CD4-positive, alpha-beta T cell (primary cell): ENCODE measurements at regions of chr4 and their contacts with region 1.

Region 1: GRCh38 chr4:70901984-70902576 is at the start of gene MOB1B:
- DNase-seq: peak; percentile 69 to 92 (median 82)
- ATAC-seq: peak; percentile 97
- H3K4me3 ChIP-seq: peak within 1 kb of the TSS; percentile 74
- H3K4me3 Mint-ChIP-seq: peak within 1 kb of the TSS; percentile 100
- H3K27ac ChIP-seq: peak within 1 kb of the TSS in 1 of 2 donors; percentile 16
- H3K27ac Mint-ChIP-seq: peak within 1 kb of the TSS; percentile 85
- H3K4me1 ChIP-seq: peaks cover 16% of the 10 kb centered on the region
- H3K4me1 Mint-ChIP-seq: peaks cover 48% of the 10 kb centered on the region
- H3K27me3 ChIP-seq: no peaks in the 10 kb centered on the region
- H3K27me3 Mint-ChIP-seq: no peaks in the 10 kb centered on the region
- CTCF ChIP-seq: peak; percentile 27
- total RNA-seq, gene MOB1B: 13.1 to 13.4 TPM

Region 2: DNA sequence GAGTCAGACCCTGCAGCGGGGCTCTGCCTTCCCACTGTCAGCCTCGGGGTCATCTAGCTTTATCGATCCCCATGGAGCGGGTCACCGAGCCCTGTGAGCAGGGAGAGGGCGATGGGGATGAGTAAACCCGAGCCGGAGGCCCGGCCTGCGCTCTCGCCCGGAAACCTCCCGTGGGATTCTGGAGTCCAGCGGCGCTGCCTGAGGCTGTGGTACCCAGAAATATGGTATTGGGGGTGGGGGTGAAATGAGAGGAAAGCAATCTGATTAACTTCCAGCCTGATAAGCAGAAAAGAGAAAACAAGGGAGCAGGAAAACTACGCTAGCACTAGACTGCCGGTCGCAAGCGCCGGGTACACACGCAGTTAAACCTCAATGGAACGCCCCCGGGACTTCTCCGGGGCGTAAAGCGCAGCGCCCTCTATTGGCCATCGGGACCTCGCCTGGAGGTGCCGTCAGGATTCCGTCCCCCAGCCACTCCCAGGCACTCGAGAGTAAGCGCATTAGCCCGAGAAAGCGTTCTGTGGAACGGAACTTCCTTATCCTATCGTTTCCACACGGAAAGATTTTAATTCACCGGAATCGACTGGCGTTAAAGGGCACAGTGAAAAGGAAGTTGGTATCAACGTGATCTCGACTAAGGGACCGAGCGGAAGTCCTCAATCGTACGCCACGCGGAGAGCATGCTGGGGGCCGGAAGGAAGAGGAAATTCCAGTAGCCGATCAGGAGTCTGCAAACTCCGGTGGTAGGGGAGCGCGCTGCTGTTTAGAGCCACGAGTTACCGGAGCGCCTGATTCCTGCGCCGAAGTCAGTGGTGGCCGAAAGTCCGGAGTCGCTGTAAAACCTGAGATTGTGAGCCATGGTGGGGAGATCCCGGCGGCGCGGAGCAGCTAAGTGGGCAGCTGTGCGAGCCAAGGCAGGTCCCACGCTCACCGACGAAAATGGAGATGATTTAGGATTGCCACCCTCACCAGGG is 214.0 kb before region 1 on chr4 and contains the start of gene UTP3:
- CTCF ChIA-PET with region 1: interaction called, 3 read pairs
- POLR2A ChIA-PET with region 1: interaction called, 10 read pairs
- intact Hi-C with region 1: loop called in 1 of 2 experiments (anchors 2 kb)
- DNase-seq: peak; percentile 87 to 98 (median 90)
- ATAC-seq: peak; percentile 87
- H3K4me3 ChIP-seq: peak within 1 kb of the TSS; percentile 74
- H3K4me3 Mint-ChIP-seq: peak within 1 kb of the TSS; percentile 91
- H3K27ac ChIP-seq: peak within 1 kb of the TSS; percentile 94 to 97
- H3K27ac Mint-ChIP-seq: peak within 1 kb of the TSS; percentile 99
- H3K4me1 ChIP-seq: peaks cover 26% of the 10 kb centered on the region
- H3K4me1 Mint-ChIP-seq: peaks cover 45% of the 10 kb centered on the region
- H3K27me3 ChIP-seq: no peaks in the 10 kb centered on the region
- H3K27me3 Mint-ChIP-seq: no peaks in the 10 kb centered on the region
- CTCF ChIP-seq: peak; percentile 98
- total RNA-seq, gene UTP3: 19.2 to 20.5 TPM